Natural killer cell (primary cell): ENCODE measurements at regions of chr6 and their contacts with region 1.

Region 1: DNA sequence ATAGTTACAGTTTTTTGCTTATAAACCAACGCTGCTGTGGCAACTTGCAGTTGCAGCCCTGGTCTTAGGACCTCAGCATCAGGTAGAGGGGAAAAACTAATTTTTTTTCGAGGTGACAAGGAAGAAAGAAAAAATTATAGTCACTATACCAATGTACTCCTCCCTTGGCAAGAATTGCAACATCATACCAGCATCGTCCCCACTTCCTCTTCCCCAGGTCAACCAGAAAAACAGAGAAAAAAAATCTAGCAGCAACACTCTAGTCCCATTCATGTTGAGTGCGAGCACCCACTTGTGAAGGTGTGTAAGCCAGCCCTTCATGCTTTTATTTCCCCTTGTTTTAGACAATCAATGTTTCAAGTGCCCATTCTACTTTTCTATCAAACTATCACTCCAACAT is 13.1 kb upstream of the DCBLD1 start:
- DNase-seq: no peak
- ATAC-seq: peak; percentile 68 to 90 (median 82)
- H3K4me3 ChIP-seq: no peak overlapping the region
- H3K4me3 Mint-ChIP-seq: peak overlapping the region; percentile 62
- H3K27ac ChIP-seq: no peak overlapping the region
- H3K27ac Mint-ChIP-seq: peak overlapping the region; percentile 63 to 72
- H3K4me1 ChIP-seq: peaks cover 13% of the 10 kb centered on the region
- H3K4me1 Mint-ChIP-seq: peaks cover 56 to 69% of the 10 kb centered on the region in 2 donors
- H3K27me3 ChIP-seq: no peaks in the 10 kb centered on the region
- H3K27me3 Mint-ChIP-seq: no peaks in the 10 kb centered on the region
- CTCF ChIP-seq: no peak

Region 2: DNA sequence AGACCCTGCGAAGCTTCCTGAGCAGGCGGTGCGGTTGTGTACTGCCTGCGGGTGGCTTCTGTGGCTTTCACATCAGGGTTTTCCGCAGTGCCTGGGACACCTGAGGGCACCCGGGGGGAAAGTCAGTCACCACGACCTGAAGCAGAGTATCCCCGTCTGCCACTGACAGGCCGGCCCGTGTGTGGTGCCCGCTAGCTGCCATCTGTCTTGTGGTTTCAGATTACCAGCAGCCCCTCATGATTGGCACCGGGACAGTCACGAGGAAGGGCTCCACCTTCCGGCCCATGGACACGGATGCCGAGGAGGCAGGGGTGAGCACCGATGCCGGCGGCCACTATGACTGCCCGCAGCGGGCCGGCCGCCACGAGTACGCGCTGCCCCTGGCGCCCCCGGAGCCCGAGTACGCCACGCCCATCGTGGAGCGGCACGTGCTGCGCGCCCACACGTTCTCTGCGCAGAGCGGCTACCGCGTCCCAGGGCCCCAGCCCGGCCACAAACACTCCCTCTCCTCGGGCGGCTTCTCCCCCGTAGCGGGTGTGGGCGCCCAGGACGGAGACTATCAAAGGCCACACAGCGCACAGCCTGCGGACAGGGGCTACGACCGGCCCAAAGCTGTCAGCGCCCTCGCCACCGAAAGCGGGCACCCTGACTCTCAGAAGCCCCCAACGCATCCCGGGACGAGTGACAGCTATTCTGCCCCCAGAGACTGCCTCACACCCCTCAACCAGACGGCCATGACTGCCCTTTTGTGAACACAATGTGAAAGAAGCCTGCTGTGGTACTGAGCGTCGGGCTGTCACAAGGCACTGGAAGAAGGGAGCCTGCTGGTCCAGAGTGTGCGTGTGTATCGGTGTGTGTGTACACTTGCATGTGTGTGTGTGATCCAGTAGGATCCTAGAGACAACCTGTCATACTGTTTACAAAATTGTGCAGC is 78.6 kb after region 1 on chr6:
- intact Hi-C with region 1: loop called (anchors 5 kb)
- DNase-seq: peak; percentile 54 to 67
- ATAC-seq: peak; percentile 45 to 65 (median 48)
- H3K4me3 ChIP-seq: peak overlapping the region; percentile 52
- H3K4me3 Mint-ChIP-seq: peak overlapping the region; percentile 88
- H3K27ac ChIP-seq: peak overlapping the region; percentile 72
- H3K27ac Mint-ChIP-seq: peak overlapping the region; percentile 91 to 92
- H3K4me1 ChIP-seq: peaks cover 28% of the 10 kb centered on the region
- H3K4me1 Mint-ChIP-seq: peaks cover 47 to 49% of the 10 kb centered on the region in 2 donors
- H3K27me3 ChIP-seq: no peaks in the 10 kb centered on the region
- H3K27me3 Mint-ChIP-seq: no peaks in the 10 kb centered on the region
- CTCF ChIP-seq: no peak